IMR-90 (cell line): ENCODE measurements at regions of chr11 and their contacts with region 1.

Region 1: GRCh38 chr11:31509429-31510345 is at the starts of genes ELP4 and IMMP1L:
- DNase-seq: peak; percentile 95
- ATAC-seq: peak; percentile 100
- H3K4me3 ChIP-seq: peak within 1 kb of the TSS; percentile 92
- H3K27ac ChIP-seq: peak within 1 kb of the TSS; percentile 79
- H3K4me1 ChIP-seq: no peaks in the 10 kb centered on the region
- H3K27me3 ChIP-seq: no peaks in the 10 kb centered on the region
- CTCF ChIP-seq: no peak
- POLR2A ChIP-seq: 0 out of 2 replicates have a peak, but pooled peaks have one; percentile 60
- RAD21 ChIP-seq: no peak
- total RNA-seq, gene ELP4: 18.1 and 20.4 TPM in 2 replicates
- total RNA-seq, gene IMMP1L: 5.0 and 10.0 TPM in 2 replicates

Region 2: DNA sequence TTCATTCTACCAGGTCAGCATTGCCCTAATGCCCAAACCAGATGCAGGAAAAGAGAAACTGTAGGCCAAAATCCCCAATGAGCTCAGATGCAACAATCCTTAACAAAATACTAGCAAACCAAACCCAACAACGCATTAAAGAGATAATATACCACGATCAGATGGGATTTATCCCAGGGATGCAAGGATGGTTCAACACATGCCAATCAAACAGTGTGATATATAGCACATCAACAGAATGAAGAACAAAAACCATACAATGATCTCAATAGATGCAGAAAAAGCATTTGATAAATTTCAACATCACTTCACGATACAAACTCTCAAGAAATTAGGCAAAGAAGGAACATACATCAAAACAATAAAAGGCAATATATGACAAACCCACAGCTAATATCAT is 45.3 kb before region 1 on chr11:
- CTCF ChIA-PET with region 1: no interaction called
- POLR2A ChIA-PET with region 1: no interaction called
- dilution Hi-C with region 1: no loop called
- in situ Hi-C with region 1: no loop called
- intact Hi-C with region 1: no loop called
- DNase-seq: no peak
- ATAC-seq: no peak
- H3K4me3 ChIP-seq: no peak overlapping the region
- H3K27ac ChIP-seq: no peak overlapping the region
- H3K4me1 ChIP-seq: no peaks in the 10 kb centered on the region
- H3K27me3 ChIP-seq: no peaks in the 10 kb centered on the region
- CTCF ChIP-seq: no peak
- POLR2A ChIP-seq: no peak
- RAD21 ChIP-seq: no peak

Region 3: GRCh38 chr11:31826536-31827438 is 317.1 kb after region 1 on chr11:
- CTCF ChIA-PET with region 1: no interaction called
- POLR2A ChIA-PET with region 1: no interaction called
- dilution Hi-C with region 1: no loop called
- in situ Hi-C with region 1: no loop called
- intact Hi-C with region 1: loop called (anchors 1 kb)
- DNase-seq: no peak
- ATAC-seq: peak; percentile 58
- H3K4me3 ChIP-seq: peak overlapping the region; percentile 33
- H3K27ac ChIP-seq: no peak overlapping the region
- H3K4me1 ChIP-seq: peaks cover 8% of the 10 kb centered on the region
- H3K27me3 ChIP-seq: peaks cover 86% of the 10 kb centered on the region
- CTCF ChIP-seq: no peak
- POLR2A ChIP-seq: no peak
- RAD21 ChIP-seq: no peak